ENCODE measurements at regions of chr12 and their contacts with region 1.

Region 1: DNA sequence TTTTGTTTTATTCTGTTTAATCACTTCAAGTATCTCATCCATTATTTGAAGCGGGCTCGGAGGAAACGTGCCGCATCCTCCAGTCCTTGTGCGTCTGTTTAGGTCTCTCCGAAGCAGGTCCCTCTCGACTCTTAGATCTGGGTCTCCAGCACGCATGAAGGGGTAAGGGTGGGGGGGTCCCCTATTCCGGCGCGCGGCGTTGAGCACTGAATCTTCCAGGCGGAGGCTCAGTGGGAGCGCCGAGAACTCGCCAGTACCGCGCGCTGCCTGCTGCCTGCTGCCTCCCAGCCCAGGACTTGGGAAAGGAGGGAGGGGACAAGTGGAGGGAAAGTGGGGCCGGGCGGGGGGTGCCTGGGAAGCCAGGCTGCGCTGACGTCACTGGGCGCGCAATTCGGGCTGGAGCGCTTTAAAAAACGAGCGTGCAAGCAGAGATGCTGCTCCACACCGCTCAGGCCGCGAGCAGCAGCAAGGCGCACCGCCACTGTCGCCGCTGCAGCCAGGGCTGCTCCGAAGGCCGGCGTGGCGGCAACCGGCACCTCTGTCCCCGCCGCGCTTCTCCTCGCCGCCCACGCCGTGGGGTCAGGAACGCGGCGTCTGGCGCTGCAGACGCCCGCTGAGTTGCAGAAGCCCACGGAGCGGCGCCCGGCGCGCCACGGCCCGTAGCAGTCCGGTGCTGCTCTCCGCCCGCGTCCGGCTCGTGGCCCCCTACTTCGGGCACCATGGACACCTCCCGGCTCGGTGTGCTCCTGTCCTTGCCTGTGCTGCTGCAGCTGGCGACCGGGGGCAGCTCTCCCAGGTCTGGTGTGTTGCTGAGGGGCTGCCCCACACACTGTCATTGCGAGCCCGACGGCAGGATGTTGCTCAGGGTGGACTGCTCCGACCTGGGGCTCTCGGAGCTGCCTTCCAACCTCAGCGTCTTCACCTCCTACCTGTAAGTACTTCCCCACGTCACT is at the start of gene LGR5:
- DNase-seq: peak; percentile 85
- ATAC-seq: peak; percentile 72
- H3K4me3 ChIP-seq: peak within 1 kb of the TSS; percentile 90 to 97 (median 91)
- H3K27ac ChIP-seq: peak within 1 kb of the TSS; percentile 82
- H3K4me1 ChIP-seq: peaks cover 46% of the 10 kb centered on the region
- H3K27me3 ChIP-seq: no peaks in the 10 kb centered on the region; a peak in 2 of 5 replicates
- CTCF ChIP-seq: no peak
- EP300 ChIP-seq: no peak
- POLR2A ChIP-seq: peak; percentile 91 to 92
- RAD21 ChIP-seq: peak; percentile 21
- total RNA-seq, gene LGR5: 20.6 and 37.0 TPM in 2 replicates

Region 2: GRCh38 chr12:71085575-71085974 is 354.1 kb before region 1 on chr12:
- CTCF ChIA-PET with region 1: no interaction called
- POLR2A ChIA-PET with region 1: no interaction called
- in situ Hi-C with region 1: no loop called
- intact Hi-C with region 1: no loop called
- DNase-seq: no peak
- ATAC-seq: no peak
- H3K4me3 ChIP-seq: no peak overlapping the region
- H3K27ac ChIP-seq: no peak overlapping the region
- H3K4me1 ChIP-seq: no peaks in the 10 kb centered on the region
- H3K27me3 ChIP-seq: no peaks in the 10 kb centered on the region
- CTCF ChIP-seq: no peak
- EP300 ChIP-seq: no peak
- POLR2A ChIP-seq: no peak
- RAD21 ChIP-seq: no peak

Region 3: DNA sequence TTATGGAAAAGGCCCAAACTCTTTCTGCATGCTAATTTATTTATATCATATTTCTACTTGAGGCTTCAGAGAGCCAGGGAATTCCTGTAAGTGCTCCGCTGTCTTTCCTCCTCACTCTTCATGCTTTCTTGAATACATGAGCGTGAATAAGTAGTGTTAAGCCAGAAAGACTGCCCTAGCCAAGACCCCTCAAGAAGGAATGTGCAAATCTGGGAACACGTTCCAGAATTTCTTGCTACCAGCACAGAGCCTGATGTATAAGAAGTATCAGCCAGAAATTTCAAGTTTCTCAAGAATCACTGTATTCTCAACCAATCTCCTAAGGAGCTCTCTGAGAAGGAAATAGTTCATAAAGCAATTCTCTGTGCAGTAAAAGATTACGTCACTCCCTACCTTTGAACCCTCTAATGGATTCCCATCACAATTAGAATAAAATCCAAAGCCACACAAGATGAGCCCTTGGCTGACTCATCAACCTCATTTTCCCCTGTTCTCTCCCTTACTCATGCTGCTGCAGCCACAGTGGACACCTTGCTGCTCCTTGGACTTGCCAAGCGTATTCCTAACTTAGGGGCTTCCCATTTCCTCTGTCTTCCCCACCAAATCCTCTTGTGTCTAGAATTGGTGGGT is 275.0 kb before region 1 on chr12:
- CTCF ChIA-PET with region 1: no interaction called
- POLR2A ChIA-PET with region 1: interaction called, 3 read pairs
- in situ Hi-C with region 1: loop called (anchors 5 kb)
- intact Hi-C with region 1: loop called (anchors 10 kb)
- DNase-seq: peak; percentile 47
- ATAC-seq: no peak
- H3K4me3 ChIP-seq: no peak overlapping the region
- H3K27ac ChIP-seq: peak overlapping the region; percentile 99
- H3K4me1 ChIP-seq: peaks cover 77% of the 10 kb centered on the region
- H3K27me3 ChIP-seq: no peaks in the 10 kb centered on the region
- CTCF ChIP-seq: no peak
- EP300 ChIP-seq: no peak
- POLR2A ChIP-seq: no peak
- RAD21 ChIP-seq: no peak

Region 4: GRCh38 chr12:71426300-71427047 is 13.2 kb before region 1 on chr12:
- CTCF ChIA-PET with region 1: no interaction called
- POLR2A ChIA-PET with region 1: interaction called, 16 read pairs
- in situ Hi-C with region 1: no loop called
- intact Hi-C with region 1: no loop called
- DNase-seq: no peak
- ATAC-seq: no peak
- H3K4me3 ChIP-seq: no peak overlapping the region
- H3K27ac ChIP-seq: no peak overlapping the region
- H3K4me1 ChIP-seq: peaks cover 16% of the 10 kb centered on the region; the same call in 1 of the 2 replicates
- H3K27me3 ChIP-seq: no peaks in the 10 kb centered on the region
- CTCF ChIP-seq: no peak
- EP300 ChIP-seq: no peak
- POLR2A ChIP-seq: no peak
- RAD21 ChIP-seq: no peak

Region 5: DNA sequence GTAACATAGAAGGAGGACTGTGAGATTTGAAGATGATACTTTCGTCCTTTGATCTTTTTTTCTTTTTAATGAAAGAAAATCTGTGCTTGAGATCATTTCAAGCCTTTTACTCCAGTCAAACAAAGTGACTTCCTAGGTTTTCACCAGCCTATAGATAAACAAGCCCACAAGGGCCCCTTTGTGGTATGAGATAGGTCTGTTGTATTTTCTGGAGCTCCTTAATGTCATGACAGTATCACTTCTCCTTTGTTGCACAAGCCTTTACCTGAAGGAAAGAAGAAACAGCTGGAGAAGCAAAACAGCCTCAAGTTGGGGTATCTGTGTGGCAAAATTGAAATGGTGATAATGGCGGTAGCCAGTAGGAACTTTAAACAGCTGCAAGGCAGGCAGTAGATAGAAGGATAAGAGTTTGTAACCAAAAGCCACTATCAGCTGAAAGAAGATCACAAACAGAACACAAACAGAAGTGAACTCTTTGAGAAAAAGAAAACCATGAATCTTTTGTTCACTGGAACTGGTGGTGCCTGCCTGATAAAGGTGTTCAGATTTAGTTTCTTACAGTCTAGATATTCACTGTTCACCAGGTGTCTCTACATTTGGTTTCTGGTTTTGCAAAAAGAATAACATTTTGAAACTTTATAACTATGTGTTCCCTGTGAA is 96.8 kb after region 1 on chr12:
- CTCF ChIA-PET with region 1: no interaction called
- POLR2A ChIA-PET with region 1: interaction called, 19 read pairs
- in situ Hi-C with region 1: no loop called
- intact Hi-C with region 1: loop called (anchors 1 kb)
- DNase-seq: peak; percentile 76
- ATAC-seq: peak; percentile 71
- H3K4me3 ChIP-seq: peak overlapping the region in 1 of 3 experiments; percentile 7; a peak in 1 of 6 replicates
- H3K27ac ChIP-seq: peak overlapping the region; percentile 74
- H3K4me1 ChIP-seq: peaks cover 50% of the 10 kb centered on the region
- H3K27me3 ChIP-seq: no peaks in the 10 kb centered on the region
- CTCF ChIP-seq: no peak
- EP300 ChIP-seq: peak in 1 of 2 experiments; percentile 43; a peak in 2 of 4 replicates
- POLR2A ChIP-seq: no peak
- RAD21 ChIP-seq: no peak

Region 6: DNA sequence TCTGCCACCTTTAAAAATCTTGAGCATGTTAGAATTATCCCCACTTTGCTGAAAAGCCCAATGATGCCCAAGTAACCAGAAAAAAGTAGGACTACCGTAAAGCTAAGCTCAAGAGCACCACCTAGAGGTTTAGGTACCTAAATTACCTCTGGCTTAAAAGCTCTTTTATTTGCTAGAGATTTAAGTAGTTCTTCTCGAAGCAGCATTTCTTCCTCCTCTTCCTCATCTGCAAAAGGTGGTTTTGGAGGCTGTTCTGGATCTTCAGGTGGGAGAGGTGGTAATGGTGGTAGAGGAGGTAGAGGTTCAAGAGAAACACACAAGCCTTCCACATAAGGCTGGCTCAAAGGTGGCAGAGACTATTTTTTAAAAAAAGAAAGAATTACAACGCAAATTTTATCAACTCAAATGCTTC is 197.1 kb after region 1 on chr12:
- CTCF ChIA-PET with region 1: no interaction called
- POLR2A ChIA-PET with region 1: no interaction called
- in situ Hi-C with region 1: no loop called
- intact Hi-C with region 1: loop called (anchors 10 kb)
- DNase-seq: peak; percentile 70
- ATAC-seq: peak; percentile 51
- H3K4me3 ChIP-seq: no peak overlapping the region
- H3K27ac ChIP-seq: no peak overlapping the region
- H3K4me1 ChIP-seq: no peaks in the 10 kb centered on the region
- H3K27me3 ChIP-seq: no peaks in the 10 kb centered on the region
- CTCF ChIP-seq: peak; percentile 70
- EP300 ChIP-seq: no peak
- POLR2A ChIP-seq: no peak
- RAD21 ChIP-seq: peak; percentile 29; the same call in 1 of the 2 replicates

Measured in HepG2 (cell line).